Right ventricle myocardium inferior (tissue), 1 donor: ENCODE measurements at regions of chr1 and their contacts with region 1.

Region 1: DNA sequence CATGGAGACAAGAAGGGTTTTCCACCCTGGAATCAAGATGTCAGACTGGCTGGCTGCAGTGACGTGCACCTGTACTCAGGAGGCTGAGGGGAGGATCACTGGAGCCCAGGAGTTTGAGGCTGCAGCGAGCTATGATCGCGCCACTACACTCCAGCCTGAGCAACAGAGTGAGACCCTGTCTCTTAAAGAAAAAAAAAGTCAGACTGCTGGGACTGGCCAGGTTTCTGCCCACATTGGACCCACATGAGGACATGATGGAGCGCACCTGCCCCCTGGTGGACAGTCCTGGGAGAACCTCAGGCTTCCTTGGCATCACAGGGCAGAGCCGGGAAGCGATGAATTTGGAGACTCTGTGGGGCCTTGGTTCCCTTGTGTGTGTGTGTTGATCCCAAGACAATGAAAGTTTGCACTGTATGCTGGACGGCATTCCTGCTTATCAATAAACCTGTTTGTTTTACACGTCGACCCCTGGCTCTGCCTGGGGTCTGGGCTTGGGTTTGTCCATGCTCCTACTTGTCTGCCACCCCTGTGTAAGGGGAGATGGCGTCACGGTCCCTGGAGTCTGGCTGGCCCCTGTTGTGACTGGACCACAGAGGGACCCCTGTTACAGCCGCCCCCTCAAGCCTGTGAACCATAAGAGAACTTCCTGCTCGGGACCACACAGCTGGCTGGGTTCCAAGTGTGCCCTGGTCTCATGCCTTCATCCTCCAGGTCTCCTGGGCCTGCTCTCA is 20.9 kb upstream of the VPS13D start:
- DNase-seq: peak; percentile 90
- ATAC-seq: peak; percentile 91

Region 2: DNA sequence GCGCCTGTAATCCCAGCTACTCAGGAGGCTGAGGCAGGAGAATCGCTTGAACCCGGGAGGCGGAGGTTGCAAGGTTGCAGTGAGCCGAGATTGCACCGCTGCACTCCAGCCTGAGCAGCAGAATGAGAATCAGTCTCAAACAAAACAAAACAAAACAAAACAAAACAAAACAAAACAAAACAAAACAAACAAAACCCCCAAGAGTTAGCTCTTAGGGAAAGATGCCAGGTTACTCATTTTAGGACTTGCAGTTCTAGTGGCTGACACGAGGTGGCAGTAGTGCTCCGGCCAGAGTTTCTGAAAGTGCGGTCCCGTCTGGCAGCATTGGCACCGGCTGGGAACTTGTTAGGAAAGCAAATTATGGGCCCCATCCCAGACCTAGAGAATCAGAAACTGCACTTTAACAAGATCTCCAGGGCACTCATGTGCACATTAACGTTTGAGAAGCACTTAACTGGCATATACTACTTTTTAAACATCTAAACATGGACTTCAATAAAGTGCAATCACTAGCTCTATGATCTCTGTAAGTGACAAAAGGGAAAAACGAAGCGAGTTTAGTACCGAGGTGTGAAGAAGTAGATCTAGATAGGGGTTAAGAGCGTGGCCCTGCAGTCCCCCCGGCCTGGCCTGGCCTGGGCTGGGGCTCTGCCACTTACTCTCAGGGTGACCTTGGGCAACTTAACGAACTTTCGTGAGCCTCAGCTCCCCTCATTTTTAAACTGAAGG is 84.1 kb before region 1 on chr1:
- intact Hi-C with region 1: loop called (anchors 1 kb)
- DNase-seq: peak; percentile 91
- ATAC-seq: peak; percentile 77